GM10248 (cell line): ENCODE measurements at regions of chr13 and their contacts with region 1.

Region 1: GRCh38 chr13:97109841-97110492 is 112.2 kb upstream of the MBNL2 start:
- DNase-seq: peak; percentile 85
- CTCF ChIP-seq: peak; percentile 89

Region 2: DNA sequence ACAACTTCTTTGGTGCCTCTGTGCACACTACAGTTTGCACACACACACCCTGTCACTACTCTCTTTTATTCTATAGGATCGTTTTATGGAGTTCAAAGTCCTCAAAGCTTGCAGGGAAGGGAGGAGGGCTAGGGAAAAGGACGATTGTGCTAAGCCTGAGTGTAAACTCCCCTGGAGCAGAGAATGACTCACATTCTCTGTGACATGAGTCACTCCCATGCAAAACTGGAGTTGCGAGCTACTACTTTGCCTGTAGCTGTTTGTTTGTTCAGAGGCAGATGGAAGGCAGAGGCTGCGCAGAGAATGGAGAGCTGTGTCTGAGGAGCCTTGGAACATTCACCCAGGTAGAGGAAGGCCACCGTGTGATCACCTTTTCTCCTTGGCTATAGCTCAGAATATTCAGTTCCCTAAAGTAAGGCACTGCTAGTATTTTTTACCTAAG is 31.6 kb after region 1 on chr13:
- CTCF ChIA-PET with region 1: interaction called, 15 read pairs
- POLR2A ChIA-PET with region 1: no interaction called
- DNase-seq: no peak
- CTCF ChIP-seq: no peak

Region 3: GRCh38 chr13:97231118-97231828 is 121.3 kb after region 1 on chr13:
- CTCF ChIA-PET with region 1: interaction called, 11 read pairs
- POLR2A ChIA-PET with region 1: no interaction called
- DNase-seq: no peak
- CTCF ChIP-seq: no peak

Region 4: DNA sequence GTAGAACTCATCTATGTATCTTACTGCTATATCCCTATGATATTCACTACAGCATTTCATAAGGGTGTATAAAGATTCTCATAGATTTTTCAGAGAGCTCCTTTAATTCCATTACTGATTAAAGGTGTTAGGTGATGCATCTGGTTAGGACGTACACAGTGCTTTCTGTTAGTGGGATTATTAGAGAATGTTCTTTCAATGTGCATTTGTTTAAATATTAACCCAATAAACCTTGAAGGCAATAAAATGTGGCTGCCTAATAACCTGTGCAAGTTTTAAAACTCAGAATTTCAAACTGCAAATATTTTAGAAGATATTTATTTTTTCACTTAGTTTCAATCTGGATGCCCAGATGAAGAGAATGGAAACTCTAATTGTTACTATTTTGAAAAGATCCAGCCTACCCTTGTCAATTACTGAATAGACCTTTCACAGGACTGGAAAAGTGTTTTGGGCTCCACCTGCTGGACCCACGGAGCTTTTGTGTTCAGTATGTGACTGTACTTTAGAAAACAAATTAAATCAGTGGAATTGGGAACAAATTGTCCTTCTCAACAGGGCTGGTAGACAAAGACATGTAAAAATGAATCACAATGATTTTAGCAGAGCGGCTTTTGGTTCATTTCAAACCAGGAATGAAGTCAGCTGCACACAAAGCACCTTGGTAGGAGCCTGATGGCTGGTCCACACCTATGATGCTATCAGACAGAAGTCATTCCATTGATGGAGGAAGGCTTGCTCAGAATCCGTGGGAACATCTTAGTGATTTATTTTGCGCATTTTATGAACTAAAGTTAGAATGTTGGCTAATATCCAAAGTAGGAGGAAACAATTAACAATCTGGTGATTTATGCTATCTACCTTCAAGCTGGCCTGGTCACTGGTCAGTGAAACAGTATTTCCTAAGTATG is 234.6 kb after region 1 on chr13:
- CTCF ChIA-PET with region 1: interaction called, 44 read pairs
- POLR2A ChIA-PET with region 1: no interaction called
- DNase-seq: peak; percentile 32
- CTCF ChIP-seq: peak; percentile 60

Region 5: DNA sequence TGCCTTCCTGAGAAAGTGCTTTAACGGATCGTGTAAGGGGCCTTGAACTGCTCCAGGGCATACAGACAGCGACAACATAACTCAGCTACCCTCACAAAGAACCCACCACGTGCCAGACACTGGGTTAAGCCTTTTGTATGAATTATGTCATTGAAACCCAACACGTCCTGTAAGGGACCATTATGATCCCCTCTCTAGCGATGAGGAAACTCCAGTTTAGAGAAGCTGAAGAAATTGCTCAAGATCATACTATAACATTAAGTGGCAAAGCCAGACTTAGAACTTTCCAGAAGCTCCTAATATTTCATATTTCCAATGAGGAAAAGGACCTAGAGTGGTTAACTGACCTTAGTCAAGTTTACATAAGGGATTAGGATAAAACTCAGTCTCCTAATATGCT is 267.0 kb after region 1 on chr13:
- CTCF ChIA-PET with region 1: interaction called, 11 read pairs
- POLR2A ChIA-PET with region 1: no interaction called
- DNase-seq: no peak
- CTCF ChIP-seq: no peak